PC-3 (cell line): ENCODE measurements at regions of chr2 and their contacts with region 1.

Region 1: GRCh38 chr2:239298116-239298804 is 102.6 kb downstream of the HDAC4 start:
- DNase-seq: peak; percentile 4
- ATAC-seq: peak; percentile 70
- H3K4me3 ChIP-seq: no peak overlapping the region
- H3K27ac ChIP-seq: no peak overlapping the region
- H3K4me1 ChIP-seq: no peaks in the 10 kb centered on the region
- H3K27me3 ChIP-seq: no peaks in the 10 kb centered on the region
- CTCF ChIP-seq: no peak

Region 2: DNA sequence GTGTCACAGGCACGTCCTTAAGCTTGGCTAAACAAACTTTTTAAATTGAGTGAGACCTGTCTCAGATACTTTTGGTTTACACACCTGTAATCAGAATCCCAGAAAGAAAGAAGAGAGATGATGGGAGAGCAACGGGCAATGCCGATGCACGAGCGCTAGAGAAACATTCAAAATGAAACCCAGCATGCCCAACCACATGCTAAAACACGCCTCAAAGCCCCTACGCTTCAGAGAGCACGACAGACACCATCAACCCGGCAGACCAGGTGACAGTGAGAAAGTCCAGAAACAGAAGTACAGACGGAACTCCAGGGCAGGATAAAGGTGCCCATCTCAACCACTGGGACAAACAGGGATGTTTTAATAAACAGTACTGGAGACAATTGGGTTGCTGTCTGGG is 17.0 kb after region 1 on chr2:
- CTCF ChIA-PET with region 1: interaction called, 11 read pairs
- POLR2A ChIA-PET with region 1: no interaction called
- intact Hi-C with region 1: no loop called
- DNase-seq: no peak
- ATAC-seq: no peak
- H3K4me3 ChIP-seq: no peak overlapping the region
- H3K27ac ChIP-seq: no peak overlapping the region
- H3K4me1 ChIP-seq: peaks cover 9% of the 10 kb centered on the region
- H3K27me3 ChIP-seq: no peaks in the 10 kb centered on the region
- CTCF ChIP-seq: no peak

Region 3: GRCh38 chr2:239370403-239370802 is 72.1 kb after region 1 on chr2:
- CTCF ChIA-PET with region 1: no interaction called
- POLR2A ChIA-PET with region 1: interaction called, 16 read pairs
- intact Hi-C with region 1: no loop called
- DNase-seq: no peak
- ATAC-seq: no peak
- H3K4me3 ChIP-seq: no peak overlapping the region
- H3K27ac ChIP-seq: no peak overlapping the region
- H3K4me1 ChIP-seq: no peaks in the 10 kb centered on the region
- H3K27me3 ChIP-seq: no peaks in the 10 kb centered on the region
- CTCF ChIP-seq: no peak